Activated CD4-positive, alpha-beta T cell treated with anti-CD3 and anti-CD28 coated beads for 36 hours (primary cell): ENCODE measurements at regions of chr17 and their contacts with region 1.

Region 1: DNA sequence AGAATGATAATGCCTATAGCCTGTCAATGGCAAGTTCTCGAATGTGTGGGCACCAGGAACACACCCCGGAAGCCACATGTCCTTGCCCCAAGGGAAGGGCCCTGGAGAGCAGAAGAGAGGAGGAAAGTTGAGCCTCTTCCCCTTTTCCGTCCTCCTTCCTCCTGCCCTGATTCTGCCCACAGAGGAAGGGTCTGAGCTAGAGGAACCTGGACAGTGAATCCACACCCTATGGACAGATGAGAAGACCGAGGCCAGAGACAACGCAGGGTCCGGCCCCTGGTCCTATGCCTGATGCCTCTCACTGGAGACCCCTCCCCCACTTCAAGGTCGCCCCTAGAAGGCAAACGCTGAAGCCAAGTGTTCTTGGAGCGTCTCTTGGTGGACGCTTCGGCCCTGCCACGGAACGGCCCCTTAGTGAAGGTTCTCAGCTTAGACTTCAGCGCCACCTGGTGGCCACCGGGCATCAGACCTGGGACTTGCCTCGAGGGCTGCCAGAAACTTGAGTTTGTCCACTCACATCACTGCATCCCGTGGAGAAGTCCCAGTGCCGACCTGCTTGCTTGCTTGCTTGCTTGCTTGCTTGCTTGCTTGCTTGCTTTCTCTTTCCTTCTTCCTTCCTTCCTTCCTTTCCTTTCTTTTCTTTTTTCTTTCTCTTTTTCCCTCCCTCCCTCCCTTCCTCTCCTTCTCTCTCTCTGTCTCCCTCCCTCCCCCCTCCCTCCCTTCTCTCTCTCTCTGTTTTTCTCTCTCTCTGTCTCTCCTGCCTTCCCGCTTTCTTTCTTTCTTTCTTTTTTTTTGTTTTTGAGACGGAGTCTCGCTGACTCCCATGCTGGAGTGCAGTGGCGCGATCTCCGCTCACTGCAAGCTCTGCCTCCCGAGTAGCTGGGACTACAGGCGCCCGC is 20.6 kb upstream of the SPNS3 start:
- DNase-seq: peak; percentile 96
- ATAC-seq: peak; percentile 99
- H3K4me3 Mint-ChIP-seq: peak overlapping the region; percentile 23
- H3K27ac Mint-ChIP-seq: peak overlapping the region; percentile 42
- H3K4me1 Mint-ChIP-seq: peaks cover 5% of the 10 kb centered on the region
- H3K27me3 Mint-ChIP-seq: no peaks in the 10 kb centered on the region

Region 2: GRCh38 chr17:4199818-4200402 is 213.3 kb before region 1 on chr17:
- CTCF ChIA-PET with region 1: interaction called, 7 read pairs
- POLR2A ChIA-PET with region 1: no interaction called
- intact Hi-C with region 1: loop called (anchors 1 kb)
- DNase-seq: peak; percentile 60
- ATAC-seq: peak; percentile 79
- H3K4me3 Mint-ChIP-seq: no peak overlapping the region
- H3K27ac Mint-ChIP-seq: no peak overlapping the region
- H3K4me1 Mint-ChIP-seq: peaks cover 19% of the 10 kb centered on the region
- H3K27me3 Mint-ChIP-seq: no peaks in the 10 kb centered on the region

Region 3: DNA sequence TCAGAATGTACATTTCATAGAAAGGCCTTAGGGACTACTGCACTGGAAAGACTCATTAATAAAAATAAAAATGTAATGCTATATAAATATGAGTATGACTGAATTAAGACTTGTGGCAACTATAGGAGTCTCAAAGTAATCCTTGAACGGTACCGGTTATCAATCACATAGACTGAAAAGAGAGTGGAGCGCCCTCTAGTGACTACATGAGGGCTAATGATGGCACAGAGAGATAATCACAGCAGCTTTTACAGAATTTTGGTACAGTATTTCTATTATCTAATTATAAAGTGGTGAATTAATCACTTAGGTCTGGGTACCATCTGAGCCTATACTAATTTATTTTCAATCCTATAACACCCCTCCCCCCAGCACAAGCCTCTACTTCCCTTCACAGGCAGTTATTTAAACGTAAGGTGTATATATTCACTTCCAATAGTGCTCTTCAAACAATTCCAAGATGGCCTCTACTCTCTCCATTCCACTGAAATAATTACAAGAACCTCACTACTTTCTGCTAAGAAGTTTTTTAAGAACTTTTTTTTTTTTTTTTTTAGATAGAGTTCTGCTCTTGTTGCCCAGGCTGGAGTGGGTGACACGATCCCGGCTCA is 108.7 kb before region 1 on chr17:
- CTCF ChIA-PET with region 1: no interaction called
- POLR2A ChIA-PET with region 1: no interaction called
- intact Hi-C with region 1: loop called (anchors 1 to 2 kb)
- DNase-seq: peak; percentile 73
- ATAC-seq: peak; percentile 88
- H3K4me3 Mint-ChIP-seq: no peak overlapping the region
- H3K27ac Mint-ChIP-seq: no peak overlapping the region
- H3K4me1 Mint-ChIP-seq: peaks cover 13% of the 10 kb centered on the region
- H3K27me3 Mint-ChIP-seq: no peaks in the 10 kb centered on the region

Region 4: DNA sequence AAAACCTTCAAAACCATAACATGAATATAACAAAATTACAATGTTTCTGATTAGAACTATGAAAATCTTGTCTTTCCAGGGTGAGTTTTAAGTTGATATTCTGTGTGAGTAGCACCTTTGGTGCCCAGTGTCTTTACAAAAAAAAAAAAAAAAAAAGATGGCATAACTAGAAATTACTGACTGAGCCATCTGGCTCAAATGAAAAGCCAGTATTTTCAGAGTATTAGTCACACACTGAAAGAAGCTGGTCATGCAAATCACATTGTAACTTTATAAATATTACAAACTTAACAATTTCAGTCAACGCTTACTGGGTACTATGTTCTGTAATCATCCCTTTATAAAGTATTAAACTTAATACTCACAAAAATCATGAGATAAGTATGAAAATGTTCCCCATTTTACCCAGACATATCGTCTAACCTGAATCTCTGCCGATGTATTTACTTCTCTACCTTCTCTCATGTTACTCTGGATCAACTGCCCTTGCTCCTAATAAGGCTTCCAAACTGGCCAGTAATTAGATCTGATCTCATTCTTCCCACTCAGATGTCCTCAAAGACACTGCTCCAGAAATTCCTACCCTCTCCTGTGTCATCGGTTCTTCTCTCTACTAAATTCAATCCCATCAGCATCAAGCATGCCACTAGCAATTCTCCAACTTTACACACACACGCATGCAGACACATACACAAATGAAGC is 72.1 kb before region 1 on chr17:
- CTCF ChIA-PET with region 1: interaction called, 3 read pairs
- POLR2A ChIA-PET with region 1: interaction called, 11 read pairs
- intact Hi-C with region 1: no loop called
- DNase-seq: no peak
- ATAC-seq: no peak
- H3K4me3 Mint-ChIP-seq: no peak overlapping the region
- H3K27ac Mint-ChIP-seq: no peak overlapping the region
- H3K4me1 Mint-ChIP-seq: peaks cover 28% of the 10 kb centered on the region
- H3K27me3 Mint-ChIP-seq: no peaks in the 10 kb centered on the region

Region 5: GRCh38 chr17:4394208-4395110 is 18.7 kb before region 1 on chr17:
- CTCF ChIA-PET with region 1: interaction called, 11 read pairs
- POLR2A ChIA-PET with region 1: no interaction called
- intact Hi-C with region 1: no loop called
- DNase-seq: no peak
- ATAC-seq: no peak
- H3K4me3 Mint-ChIP-seq: no peak overlapping the region
- H3K27ac Mint-ChIP-seq: no peak overlapping the region
- H3K4me1 Mint-ChIP-seq: peaks cover 9% of the 10 kb centered on the region
- H3K27me3 Mint-ChIP-seq: no peaks in the 10 kb centered on the region